ENCODE measurements at regions of chr15 and their contacts with region 1.

Region 1: DNA sequence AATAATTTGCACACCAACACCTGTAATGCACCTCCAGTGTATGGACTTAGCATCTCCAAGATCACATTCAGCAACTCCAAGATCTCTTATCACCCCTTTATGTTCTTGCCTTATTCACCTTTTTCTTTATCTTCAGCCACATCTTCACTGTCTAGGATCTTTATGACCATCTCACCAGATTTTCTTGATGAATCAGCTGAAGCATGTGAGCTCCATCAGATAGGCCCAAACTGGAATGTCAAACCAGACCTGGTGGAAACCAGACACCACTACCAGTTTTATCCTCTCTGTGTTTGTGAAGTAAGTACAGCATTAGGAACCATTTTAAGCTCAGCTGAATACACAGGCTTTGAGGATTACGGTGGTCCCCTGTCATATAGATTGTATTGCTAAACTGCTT is 330.4 kb upstream of the NDN start:
- DNase-seq: no peak
- ATAC-seq: no peak

Region 2: GRCh38 chr15:23750776-23751175 is 266.7 kb before region 1 on chr15:
- intact Hi-C with region 1: loop called (anchors 5 kb)
- DNase-seq: no peak
- ATAC-seq: no peak

Measured in sciatic nerve (tissue), 2 donors.